ENCODE measurements at regions of chr10 and their contacts with region 1.

Region 1: GRCh38 chr10:48215488-48216204 is 58.9 kb downstream of the FRMPD2 start:
- DNase-seq: no peak
- H3K4me3 ChIP-seq: no peak overlapping the region
- H3K27ac ChIP-seq: no peak overlapping the region
- H3K4me1 ChIP-seq: no peaks in the 10 kb centered on the region
- H3K27me3 ChIP-seq: peaks cover 0 to 22% (median 0%) of the 10 kb centered on the region in 4 donors
- CTCF ChIP-seq: peak in 5 of 6 experiments; percentile 44 to 76 (median 58)
- POLR2A ChIP-seq: no peak

Region 2: GRCh38 chr10:48289501-48290238 is 74.0 kb after region 1 on chr10:
- intact Hi-C with region 1: loop called (anchors 10 kb)
- DNase-seq: no peak
- H3K4me3 ChIP-seq: no peak overlapping the region
- H3K27ac ChIP-seq: no peak overlapping the region
- H3K4me1 ChIP-seq: peaks cover 5 to 27% (median 5%) of the 10 kb centered on the region in 3 donors
- H3K27me3 ChIP-seq: peaks cover 0 to 7% (median 0%) of the 10 kb centered on the region in 4 donors
- CTCF ChIP-seq: peak; percentile 66 to 84 (median 75)
- POLR2A ChIP-seq: no peak